ENCODE measurements at regions of chr16 and their contacts with region 1.

Region 1: GRCh38 chr16:25111403-25112166 is at the start of gene LCMT1:
- DNase-seq: peak; percentile 97
- H3K4me3 ChIP-seq: peak within 1 kb of the TSS; percentile 79 to 97 (median 89)
- H3K27ac ChIP-seq: peak within 1 kb of the TSS; percentile 72
- H3K4me1 ChIP-seq: peaks cover 30% of the 10 kb centered on the region
- H3K27me3 ChIP-seq: no peaks in the 10 kb centered on the region
- CTCF ChIP-seq: no peak
- total RNA-seq, gene LCMT1: 30.5 to 43.0 TPM

Region 2: DNA sequence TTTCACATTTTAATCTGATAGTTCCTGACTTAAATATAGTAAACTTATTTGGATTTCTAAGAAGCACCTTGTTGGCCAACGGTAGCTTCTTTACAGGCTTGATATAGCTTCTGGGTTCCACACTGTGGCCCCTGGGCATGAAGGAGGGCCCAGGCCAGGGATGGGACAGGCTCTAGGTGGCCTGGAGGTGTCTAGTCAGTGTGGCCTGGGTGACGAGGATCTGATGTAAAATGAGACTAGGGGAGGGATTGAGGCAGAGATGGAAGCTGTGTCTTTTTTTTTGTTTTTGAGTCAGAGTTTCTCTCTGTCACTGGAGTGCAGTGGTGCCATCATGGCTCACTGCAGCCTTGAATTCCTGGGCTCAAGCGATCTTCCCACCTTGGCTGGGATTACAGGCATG is 1088.8 kb before region 1 on chr16:
- CTCF ChIA-PET with region 1: no interaction called
- dilution Hi-C with region 1: no loop called
- in situ Hi-C with region 1: no loop called
- intact Hi-C with region 1: no loop called
- DNase-seq: no peak
- H3K4me3 ChIP-seq: no peak overlapping the region
- H3K27ac ChIP-seq: no peak overlapping the region
- H3K4me1 ChIP-seq: no peaks in the 10 kb centered on the region
- H3K27me3 ChIP-seq: no peaks in the 10 kb centered on the region
- CTCF ChIP-seq: no peak

Region 3: DNA sequence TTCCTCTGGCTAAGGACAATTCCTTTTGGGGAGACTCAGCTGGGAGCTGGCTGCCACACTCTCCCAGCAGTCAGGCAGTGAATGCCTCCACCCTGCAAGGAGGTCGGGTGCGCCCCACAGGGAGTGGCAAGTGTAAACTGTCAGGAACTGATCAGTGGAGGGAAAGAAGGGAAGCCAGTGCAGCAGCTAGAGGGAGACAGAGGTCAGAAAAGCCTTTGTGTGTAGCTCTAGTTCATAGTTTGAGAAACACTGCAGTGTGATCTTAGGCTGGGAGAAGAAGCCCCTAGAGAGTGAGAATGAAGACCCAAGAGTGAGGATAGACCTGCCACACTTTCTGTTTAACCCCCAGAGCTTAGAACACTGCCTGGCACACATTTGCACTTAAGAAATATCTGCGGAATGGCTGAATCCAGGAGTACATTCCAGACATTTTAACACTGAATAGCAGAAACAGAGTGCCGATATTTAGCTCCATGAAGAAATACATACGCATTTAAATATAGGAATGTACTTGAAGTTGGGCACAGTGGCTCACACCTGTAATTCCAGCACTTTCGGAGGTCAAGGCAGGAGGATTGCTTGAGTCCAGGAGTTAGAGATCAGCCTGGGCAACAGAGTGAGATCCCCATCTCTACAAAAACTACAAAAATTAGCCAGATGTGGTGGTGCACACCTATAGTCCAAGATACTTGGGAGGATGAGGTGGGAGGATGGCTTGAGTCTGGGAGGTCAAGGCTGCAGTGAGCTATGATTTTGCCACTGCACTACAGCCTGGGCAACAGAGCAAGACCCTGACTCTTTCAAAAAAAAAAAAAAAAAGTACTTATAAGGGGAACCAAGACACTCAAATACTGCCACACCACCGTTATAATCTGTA is 276.9 kb before region 1 on chr16:
- CTCF ChIA-PET with region 1: no interaction called
- dilution Hi-C with region 1: no loop called
- in situ Hi-C with region 1: no loop called
- intact Hi-C with region 1: loop called (anchors 5 kb)
- DNase-seq: peak; percentile 33
- H3K4me3 ChIP-seq: no peak overlapping the region
- H3K27ac ChIP-seq: no peak overlapping the region
- H3K4me1 ChIP-seq: no peaks in the 10 kb centered on the region
- H3K27me3 ChIP-seq: no peaks in the 10 kb centered on the region
- CTCF ChIP-seq: peak; percentile 49 to 75

Region 4: GRCh38 chr16:24850289-24850938 is 261.2 kb before region 1 on chr16:
- CTCF ChIA-PET with region 1: no interaction called
- dilution Hi-C with region 1: no loop called
- in situ Hi-C with region 1: no loop called
- intact Hi-C with region 1: no loop called
- DNase-seq: peak; percentile 75
- H3K4me3 ChIP-seq: no peak overlapping the region
- H3K27ac ChIP-seq: no peak overlapping the region
- H3K4me1 ChIP-seq: peaks cover 23% of the 10 kb centered on the region
- H3K27me3 ChIP-seq: no peaks in the 10 kb centered on the region
- CTCF ChIP-seq: no peak

Region 5: GRCh38 chr16:25066747-25067631 is 44.6 kb before region 1 on chr16:
- CTCF ChIA-PET with region 1: interaction called, 3 read pairs
- dilution Hi-C with region 1: no loop called
- in situ Hi-C with region 1: no loop called
- intact Hi-C with region 1: loop called (anchors 5 kb)
- DNase-seq: peak; percentile 48
- H3K4me3 ChIP-seq: peak overlapping the region; percentile 67 to 69 (median 68)
- H3K27ac ChIP-seq: peak overlapping the region; percentile 25
- H3K4me1 ChIP-seq: peaks cover 2% of the 10 kb centered on the region
- H3K27me3 ChIP-seq: no peaks in the 10 kb centered on the region
- CTCF ChIP-seq: no peak